GM12878 (cell line): ENCODE measurements at regions of chr16 and their contacts with region 1.

Region 1: GRCh38 chr16:71610936-71611871 is 14.8 kb upstream of the MARVELD3 start:
- DNase-seq: peak; percentile 25
- ATAC-seq: peak; percentile 79
- H3K4me3 ChIP-seq: no peak overlapping the region
- H3K27ac ChIP-seq: no peak overlapping the region
- H3K4me1 ChIP-seq: peaks cover 5% of the 10 kb centered on the region; the same call in 1 of the 2 replicates
- H3K27me3 ChIP-seq: no peaks in the 10 kb centered on the region
- CTCF ChIP-seq: peak; percentile 97 to 98 (median 98); a peak in 5 of 6 replicates
- EP300 ChIP-seq: no peak
- POLR2A ChIP-seq: no peak
- RAD21 ChIP-seq: peak; percentile 93

Region 2: GRCh38 chr16:71412270-71413160 is 198.7 kb before region 1 on chr16:
- CTCF ChIA-PET with region 1: interaction called, 80 read pairs
- POLR2A ChIA-PET with region 1: no interaction called
- RAD21 ChIA-PET with region 1: interaction called, 30 read pairs
- SMC1A ChIA-PET with region 1: interaction called, 42 read pairs
- in situ Hi-C with region 1: loop called (anchors 5 kb)
- intact Hi-C with region 1: loop called (anchors 1 kb)
- DNase-seq: no peak
- ATAC-seq: peak; percentile 92
- H3K4me3 ChIP-seq: no peak overlapping the region
- H3K27ac ChIP-seq: no peak overlapping the region
- H3K4me1 ChIP-seq: no peaks in the 10 kb centered on the region
- H3K27me3 ChIP-seq: peaks cover 0 to 7% of the 10 kb centered on the region in 2 experiments; a peak in 1 of 4 replicates
- CTCF ChIP-seq: peak; percentile 66 to 83 (median 82)
- EP300 ChIP-seq: no peak
- POLR2A ChIP-seq: no peak
- RAD21 ChIP-seq: peak; percentile 76

Region 3: DNA sequence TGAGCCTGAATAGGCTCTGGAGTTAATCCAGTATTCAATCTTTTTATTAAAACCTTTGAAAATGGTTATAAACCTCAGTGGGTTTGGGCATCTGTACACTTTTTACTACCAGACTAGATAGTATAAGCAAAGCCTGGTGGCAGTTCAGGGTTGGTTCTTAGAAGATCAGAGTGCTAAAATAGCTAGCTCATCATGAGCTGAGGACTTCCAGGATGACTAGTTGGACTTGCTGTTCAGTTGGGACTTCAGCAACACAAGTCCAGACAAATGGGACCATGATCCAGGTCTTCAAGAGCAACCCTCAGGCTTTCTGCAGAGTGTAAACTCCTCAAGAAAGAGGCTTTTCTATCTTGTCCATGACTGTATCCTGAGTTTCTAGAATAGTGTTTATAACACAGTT is 120.8 kb before region 1 on chr16:
- CTCF ChIA-PET with region 1: interaction called, 10 read pairs
- POLR2A ChIA-PET with region 1: no interaction called
- RAD21 ChIA-PET with region 1: interaction called, 5 read pairs
- SMC1A ChIA-PET with region 1: interaction called, 3 read pairs
- in situ Hi-C with region 1: no loop called
- intact Hi-C with region 1: no loop called
- DNase-seq: no peak
- ATAC-seq: no peak
- H3K4me3 ChIP-seq: no peak overlapping the region
- H3K27ac ChIP-seq: no peak overlapping the region
- H3K4me1 ChIP-seq: no peaks in the 10 kb centered on the region
- H3K27me3 ChIP-seq: no peaks in the 10 kb centered on the region
- CTCF ChIP-seq: no peak
- EP300 ChIP-seq: no peak
- POLR2A ChIP-seq: no peak
- RAD21 ChIP-seq: no peak

Region 4: DNA sequence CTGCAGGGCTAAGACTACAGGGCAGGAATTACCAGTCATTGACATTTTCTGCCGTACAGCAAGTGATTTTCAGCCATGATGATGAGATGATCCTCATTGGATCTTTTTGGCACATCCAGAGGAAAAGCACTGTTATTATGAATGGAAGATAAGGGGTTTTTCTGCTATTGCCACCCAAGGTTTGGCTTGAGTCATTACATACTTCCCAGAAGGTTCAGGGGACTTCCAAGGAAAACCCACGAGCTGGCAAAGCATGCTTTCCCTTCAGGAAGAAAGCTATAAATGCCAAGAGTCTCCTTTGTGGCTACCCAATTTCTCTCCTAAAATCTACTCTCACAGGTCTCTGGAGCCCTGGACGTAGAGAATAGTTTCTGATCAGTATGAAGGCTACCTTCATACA is 78.8 kb before region 1 on chr16:
- CTCF ChIA-PET with region 1: interaction called, 17 read pairs
- POLR2A ChIA-PET with region 1: no interaction called
- RAD21 ChIA-PET with region 1: interaction called, 3 read pairs
- SMC1A ChIA-PET with region 1: interaction called, 52 read pairs
- in situ Hi-C with region 1: no loop called
- intact Hi-C with region 1: loop called (anchors 1 kb)
- DNase-seq: no peak
- ATAC-seq: no peak
- H3K4me3 ChIP-seq: no peak overlapping the region
- H3K27ac ChIP-seq: no peak overlapping the region
- H3K4me1 ChIP-seq: no peaks in the 10 kb centered on the region
- H3K27me3 ChIP-seq: no peaks in the 10 kb centered on the region
- CTCF ChIP-seq: no peak
- EP300 ChIP-seq: no peak
- POLR2A ChIP-seq: no peak
- RAD21 ChIP-seq: no peak

Region 5: GRCh38 chr16:71564155-71564967 is 46.8 kb before region 1 on chr16:
- CTCF ChIA-PET with region 1: interaction called, 312 read pairs
- POLR2A ChIA-PET with region 1: interaction called, 16 read pairs
- RAD21 ChIA-PET with region 1: interaction called, 213 read pairs
- SMC1A ChIA-PET with region 1: interaction called, 162 read pairs
- in situ Hi-C with region 1: no loop called
- intact Hi-C with region 1: loop called (anchors 1 kb)
- DNase-seq: no peak
- ATAC-seq: peak; percentile 1; the same call in 2 of the 3 replicates
- H3K4me3 ChIP-seq: peak overlapping the region; percentile 76
- H3K27ac ChIP-seq: peak overlapping the region; percentile 91
- H3K4me1 ChIP-seq: peaks cover 3% of the 10 kb centered on the region; the same call in 1 of the 2 replicates
- H3K27me3 ChIP-seq: no peaks in the 10 kb centered on the region
- CTCF ChIP-seq: no peak
- EP300 ChIP-seq: no peak
- POLR2A ChIP-seq: no peak
- RAD21 ChIP-seq: no peak

Region 6: DNA sequence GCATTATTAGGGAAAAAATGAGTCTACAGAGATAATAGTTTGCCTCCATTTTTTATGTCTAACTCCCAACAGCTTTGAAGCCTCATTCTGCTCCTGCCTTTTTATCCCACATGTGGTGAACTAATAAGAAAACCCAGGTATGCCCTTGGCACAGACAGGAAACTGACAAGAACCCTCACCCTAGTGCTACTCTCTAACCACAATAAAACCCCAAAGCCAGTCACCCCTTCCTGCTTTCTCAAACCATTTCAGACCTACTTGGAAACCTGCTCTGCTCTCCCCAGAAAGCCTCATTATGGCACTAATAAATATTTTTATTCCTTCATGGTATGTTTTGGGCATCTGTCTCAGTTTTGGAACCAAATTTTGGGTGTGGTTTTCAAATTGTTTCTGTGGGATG is 10.9 kb after region 1 on chr16:
- CTCF ChIA-PET with region 1: interaction called, 27 read pairs
- POLR2A ChIA-PET with region 1: no interaction called
- RAD21 ChIA-PET with region 1: interaction called, 4 read pairs
- SMC1A ChIA-PET with region 1: interaction called, 13 read pairs
- in situ Hi-C with region 1: no loop called
- intact Hi-C with region 1: no loop called
- DNase-seq: no peak
- ATAC-seq: no peak
- H3K4me3 ChIP-seq: no peak overlapping the region
- H3K27ac ChIP-seq: no peak overlapping the region
- H3K4me1 ChIP-seq: peaks cover 5% of the 10 kb centered on the region; the same call in 1 of the 2 replicates
- H3K27me3 ChIP-seq: no peaks in the 10 kb centered on the region; a peak in 1 of 4 replicates
- CTCF ChIP-seq: no peak
- EP300 ChIP-seq: no peak
- POLR2A ChIP-seq: no peak
- RAD21 ChIP-seq: no peak

Region 7: GRCh38 chr16:71746442-71747046 is 135.3 kb after region 1 on chr16:
- CTCF ChIA-PET with region 1: interaction called, 6 read pairs
- POLR2A ChIA-PET with region 1: no interaction called
- RAD21 ChIA-PET with region 1: interaction called, 5 read pairs
- SMC1A ChIA-PET with region 1: no interaction called
- in situ Hi-C with region 1: no loop called
- intact Hi-C with region 1: loop called (anchors 1 kb)
- DNase-seq: no peak
- ATAC-seq: peak; percentile 71
- H3K4me3 ChIP-seq: no peak overlapping the region
- H3K27ac ChIP-seq: no peak overlapping the region
- H3K4me1 ChIP-seq: no peaks in the 10 kb centered on the region
- H3K27me3 ChIP-seq: no peaks in the 10 kb centered on the region
- CTCF ChIP-seq: peak; percentile 48 to 63 (median 52)
- EP300 ChIP-seq: no peak
- POLR2A ChIP-seq: no peak
- RAD21 ChIP-seq: peak; percentile 69